Activated naive CD4-positive, alpha-beta T cell treated with anti-CD3 and anti-CD28 coated beads for 36 hours (primary cell): ENCODE measurements at regions of chr11 and their contacts with region 1.

Region 1: DNA sequence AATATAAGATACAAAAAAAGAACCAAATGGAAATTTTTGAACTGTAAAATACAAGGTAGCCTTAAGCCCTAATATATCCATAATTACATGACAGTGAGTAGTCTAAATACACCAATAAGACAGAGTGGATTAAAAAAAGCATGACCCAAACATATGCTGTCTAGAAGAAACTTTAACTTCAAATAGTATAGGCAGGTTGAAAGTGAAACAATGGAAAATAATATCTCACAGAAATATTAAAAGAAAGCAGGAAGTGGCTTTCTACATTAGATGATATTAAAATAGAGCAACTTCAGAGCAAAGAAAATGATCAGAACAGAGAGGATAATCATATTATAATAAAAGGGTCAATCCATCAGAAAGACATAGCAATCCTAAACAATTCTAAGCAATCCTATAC is 21.8 kb downstream of the DCUN1D5 start:
- DNase-seq: no peak
- H3K4me3 Mint-ChIP-seq: no peak overlapping the region
- H3K27ac Mint-ChIP-seq: peak overlapping the region; percentile 66
- H3K4me1 Mint-ChIP-seq: peaks cover 39% of the 10 kb centered on the region
- H3K27me3 Mint-ChIP-seq: no peaks in the 10 kb centered on the region

Region 2: GRCh38 chr11:103108933-103109817 is 39.0 kb after region 1 on chr11 and contains the start of gene DYNC2H1:
- CTCF ChIA-PET with region 1: no interaction called
- intact Hi-C with region 1: loop called (anchors 1 kb)
- DNase-seq: peak; percentile 90
- H3K4me3 Mint-ChIP-seq: peak within 1 kb of the TSS; percentile 84
- H3K27ac Mint-ChIP-seq: peak within 1 kb of the TSS; percentile 72
- H3K4me1 Mint-ChIP-seq: peaks cover 7% of the 10 kb centered on the region
- H3K27me3 Mint-ChIP-seq: no peaks in the 10 kb centered on the region
- total RNA-seq, gene DYNC2H1: 1.9 to 2.8 TPM

Region 3: DNA sequence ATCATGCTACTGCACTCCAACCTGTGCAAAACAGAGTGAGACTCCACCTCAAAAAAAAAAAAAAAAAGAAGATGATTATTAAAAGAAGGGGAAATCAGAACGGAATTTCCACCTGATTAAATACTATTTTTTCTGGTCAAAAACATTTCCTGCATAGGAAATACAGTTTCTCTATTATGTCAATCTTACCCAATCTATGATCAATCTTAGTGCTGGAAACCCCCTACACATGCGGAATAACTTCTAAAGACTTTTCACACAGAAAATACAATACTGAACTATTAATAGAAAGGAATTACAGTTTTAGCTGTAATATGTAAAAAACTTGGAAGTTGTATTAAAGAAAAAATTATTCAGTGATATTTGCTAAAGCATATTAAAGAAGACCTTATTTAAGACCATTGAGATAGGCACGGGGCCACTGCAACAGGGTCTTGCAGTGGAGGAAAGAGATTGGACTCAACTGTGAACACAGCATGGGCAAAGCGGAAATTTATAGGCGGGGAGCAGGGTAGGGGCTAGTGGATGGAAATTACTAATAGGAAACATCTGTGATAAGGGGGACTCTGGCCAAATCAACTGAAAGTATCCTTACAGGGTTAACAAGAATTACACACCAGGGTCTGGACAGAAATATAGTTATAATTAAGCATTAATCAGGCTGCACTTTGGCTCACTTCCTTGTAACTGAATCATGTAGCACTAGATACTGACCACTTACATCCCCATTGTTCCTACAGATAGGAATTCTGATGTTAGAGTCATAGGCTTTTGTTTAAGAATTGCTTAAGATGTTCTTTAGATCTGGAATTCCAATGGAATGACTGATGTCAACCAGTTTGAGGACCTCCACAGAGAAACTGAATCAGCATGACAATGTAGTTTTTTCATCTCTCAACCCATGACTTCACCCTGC is 554.8 kb after region 1 on chr11:
- CTCF ChIA-PET with region 1: no interaction called
- intact Hi-C with region 1: no loop called
- DNase-seq: no peak
- H3K4me3 Mint-ChIP-seq: no peak overlapping the region
- H3K27ac Mint-ChIP-seq: no peak overlapping the region
- H3K4me1 Mint-ChIP-seq: no peaks in the 10 kb centered on the region
- H3K27me3 Mint-ChIP-seq: no peaks in the 10 kb centered on the region